ENCODE measurements at regions of chr10 and their contacts with region 1.

Region 1: GRCh38 chr10:102615361-102615760 is 28.9 kb upstream of the TRIM8 start:
- DNase-seq: peak; percentile 29
- H3K4me3 ChIP-seq: no peak overlapping the region
- H3K27ac ChIP-seq: no peak overlapping the region
- H3K4me1 ChIP-seq: peaks cover 52% of the 10 kb centered on the region
- H3K27me3 ChIP-seq: no peaks in the 10 kb centered on the region
- CTCF ChIP-seq: peak; percentile 32 to 65
- POLR2A ChIP-seq: no peak

Region 2: GRCh38 chr10:102604379-102604960 is 10.9 kb before region 1 on chr10:
- CTCF ChIA-PET with region 1: interaction called, 23 read pairs
- POLR2A ChIA-PET with region 1: interaction called, 4 read pairs
- dilution Hi-C with region 1: no loop called
- intact Hi-C with region 1: loop called (anchors 1 kb)
- DNase-seq: peak; percentile 86
- H3K4me3 ChIP-seq: no peak overlapping the region
- H3K27ac ChIP-seq: peak overlapping the region; percentile 78
- H3K4me1 ChIP-seq: peaks cover 46% of the 10 kb centered on the region
- H3K27me3 ChIP-seq: no peaks in the 10 kb centered on the region
- CTCF ChIP-seq: no peak
- POLR2A ChIP-seq: no peak

Region 3: GRCh38 chr10:102629661-102630614 is 14.6 kb after region 1 on chr10:
- CTCF ChIA-PET with region 1: interaction called, 56 read pairs
- POLR2A ChIA-PET with region 1: interaction called, 4 read pairs
- dilution Hi-C with region 1: no loop called
- intact Hi-C with region 1: loop called (anchors 1 kb)
- DNase-seq: peak; percentile 50
- H3K4me3 ChIP-seq: no peak overlapping the region
- H3K27ac ChIP-seq: peak overlapping the region; percentile 97
- H3K4me1 ChIP-seq: peaks cover 73% of the 10 kb centered on the region
- H3K27me3 ChIP-seq: no peaks in the 10 kb centered on the region
- CTCF ChIP-seq: no peak
- POLR2A ChIP-seq: peak; percentile 47